ENCODE measurements at regions of chr18 and their contacts with region 1.

Region 1: DNA sequence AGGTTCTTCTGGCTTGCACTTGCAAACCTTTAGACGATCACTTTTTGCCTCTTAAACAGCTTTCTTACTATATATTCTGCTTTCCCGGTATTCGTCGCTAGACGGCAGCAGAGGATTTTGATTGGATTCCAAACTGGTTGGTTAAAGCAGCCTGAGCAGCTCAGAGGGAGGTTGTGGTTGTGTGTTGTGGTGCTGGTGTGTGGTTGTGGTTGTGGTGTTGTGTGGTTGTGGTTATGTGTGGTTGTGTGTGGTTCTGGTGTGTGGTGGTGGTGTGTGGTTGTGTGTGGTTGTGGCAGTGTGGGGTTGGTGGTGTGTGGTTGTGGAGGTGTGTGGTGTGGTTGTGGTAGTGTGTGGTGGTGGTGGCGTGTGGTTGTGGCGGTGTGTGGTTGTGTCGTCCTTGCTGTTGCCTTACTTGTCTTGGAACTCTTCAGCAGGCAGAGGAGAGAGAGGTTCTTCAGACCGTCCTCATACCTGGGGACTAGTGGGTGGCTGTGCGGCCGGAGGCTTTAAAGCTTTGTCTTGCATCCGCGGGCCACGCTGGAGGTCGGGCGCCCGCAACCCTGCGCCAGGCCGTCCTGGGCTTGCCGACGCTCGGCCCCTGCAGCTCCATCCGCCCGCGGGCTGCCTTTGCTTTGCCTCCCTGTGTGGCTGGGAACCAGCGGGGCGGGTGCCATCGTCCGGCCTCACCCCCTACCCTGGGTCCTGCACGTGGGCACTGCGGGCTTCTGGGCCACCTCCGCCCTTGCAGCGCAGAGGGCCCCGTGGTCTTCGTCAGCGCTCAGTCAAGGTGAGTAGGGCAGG is 190.8 kb downstream of the ARHGAP28 start:
- DNase-seq: peak; percentile 24
- H3K4me3 ChIP-seq: no peak overlapping the region
- CTCF ChIP-seq: peak; percentile 59

Region 2: DNA sequence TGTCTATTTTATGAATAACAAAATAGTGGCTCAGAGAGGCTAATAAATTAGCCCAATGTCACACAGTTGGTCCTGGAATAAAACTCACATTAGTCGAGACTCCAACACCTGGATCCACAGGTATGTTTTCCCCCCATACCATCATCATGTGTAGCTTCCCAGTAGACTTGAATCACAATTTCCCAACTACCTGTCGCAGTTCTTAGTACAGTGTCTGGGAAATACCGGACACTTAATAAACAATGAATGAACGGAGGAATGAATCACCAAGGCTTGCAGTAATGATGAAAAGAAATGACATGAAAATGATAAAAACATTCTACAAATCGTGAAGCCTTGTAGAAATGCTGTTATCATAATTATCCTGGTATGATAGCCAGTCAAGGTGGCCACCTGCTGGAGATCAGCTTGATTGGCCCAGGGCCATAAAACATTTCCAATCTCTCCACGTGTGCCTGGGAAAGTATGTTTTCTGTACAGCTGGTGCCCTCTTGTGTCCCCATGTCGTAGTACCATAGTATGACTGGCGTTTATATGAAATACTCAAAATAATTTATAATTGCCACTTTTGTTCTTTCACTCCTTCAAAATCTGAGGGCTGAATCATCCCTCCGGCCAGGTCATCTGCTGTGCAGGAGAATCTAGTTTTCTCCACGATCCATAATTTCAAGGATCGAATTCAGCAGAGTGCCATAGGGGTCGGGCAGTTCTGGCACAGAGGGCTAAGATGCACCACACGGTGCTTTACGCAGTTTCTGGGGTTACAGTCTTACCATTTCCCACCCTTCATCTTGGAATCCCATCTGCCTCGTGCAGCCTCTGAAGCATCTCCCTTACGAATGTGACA is 101.9 kb after region 1 on chr18:
- CTCF ChIA-PET with region 1: interaction called, 30 read pairs
- POLR2A ChIA-PET with region 1: no interaction called
- DNase-seq: no peak
- H3K4me3 ChIP-seq: no peak overlapping the region
- CTCF ChIP-seq: peak; percentile 10

Region 3: GRCh38 chr18:7170292-7170691 is 250.0 kb after region 1 on chr18:
- CTCF ChIA-PET with region 1: interaction called, 171 read pairs
- POLR2A ChIA-PET with region 1: no interaction called
- DNase-seq: no peak
- H3K4me3 ChIP-seq: no peak overlapping the region
- CTCF ChIP-seq: no peak

Region 4: DNA sequence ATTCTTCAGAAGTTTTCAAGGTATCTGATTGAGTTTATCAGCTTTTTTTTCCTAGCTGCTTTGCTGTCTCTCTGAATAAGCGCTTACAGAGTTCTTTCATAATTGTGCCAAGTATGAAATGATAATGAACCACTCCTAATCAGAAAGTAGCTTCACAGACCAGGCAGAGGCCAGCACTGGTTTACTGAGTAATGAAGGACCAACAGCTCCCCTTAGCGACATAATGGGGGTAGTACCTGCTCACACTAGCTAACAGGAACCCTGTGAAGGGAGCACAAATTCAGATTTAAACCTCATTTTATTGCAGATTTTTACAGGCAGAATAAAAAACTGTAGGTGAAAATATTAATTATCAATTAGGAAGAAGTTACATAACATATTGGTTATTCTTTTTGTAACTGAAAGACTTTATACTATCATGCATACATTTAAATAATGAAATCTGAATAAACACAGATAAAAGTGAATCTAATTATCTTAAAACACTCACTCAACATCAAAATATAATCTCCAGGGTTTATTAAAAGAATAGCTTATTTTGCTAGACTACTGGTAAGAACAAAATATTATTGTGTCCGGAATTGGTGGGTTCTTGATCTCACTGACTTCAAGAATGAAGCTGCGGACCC is 256.9 kb after region 1 on chr18:
- CTCF ChIA-PET with region 1: interaction called, 171 read pairs
- POLR2A ChIA-PET with region 1: no interaction called
- DNase-seq: peak; percentile 44
- H3K4me3 ChIP-seq: no peak overlapping the region
- CTCF ChIP-seq: peak; percentile 65